ENCODE measurements at regions of chr3 and their contacts with region 1.

Region 1: GRCh38 chr3:81910244-81910852 is 148.9 kb upstream of the GBE1 start:
- DNase-seq: no peak
- ATAC-seq: peak; percentile 56

Region 2: GRCh38 chr3:81676706-81677456 is 233.5 kb before region 1 on chr3:
- intact Hi-C with region 1: loop called (anchors 10 kb)
- DNase-seq: no peak
- ATAC-seq: no peak

Region 3: DNA sequence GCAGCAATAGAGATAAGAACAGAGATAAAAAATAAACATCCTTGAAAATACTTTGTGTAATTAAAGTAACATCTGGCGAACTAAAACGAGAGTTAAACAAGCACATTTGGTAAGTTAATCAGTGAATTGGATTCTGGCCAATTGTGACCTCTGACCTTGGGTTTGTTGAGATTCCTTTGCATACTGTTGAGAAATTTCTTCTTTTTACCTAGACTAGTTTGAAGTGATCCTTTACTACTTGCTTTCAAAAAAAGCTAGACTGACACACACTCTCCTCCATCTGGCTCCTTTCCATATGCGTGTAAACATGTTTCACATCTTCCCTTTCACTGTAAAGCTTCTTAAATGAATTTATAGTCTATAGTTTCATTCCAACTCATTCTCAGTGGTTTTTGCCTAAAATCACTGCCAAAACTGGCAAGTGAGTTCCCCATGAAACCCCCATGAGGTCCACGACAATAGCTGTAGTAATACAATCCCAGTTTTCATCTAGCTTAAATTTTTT is 131.6 kb before region 1 on chr3:
- intact Hi-C with region 1: no loop called
- DNase-seq: no peak
- ATAC-seq: no peak